MCF 10A (cell line): ENCODE measurements at regions of chr17 and their contacts with region 1.

Region 1: DNA sequence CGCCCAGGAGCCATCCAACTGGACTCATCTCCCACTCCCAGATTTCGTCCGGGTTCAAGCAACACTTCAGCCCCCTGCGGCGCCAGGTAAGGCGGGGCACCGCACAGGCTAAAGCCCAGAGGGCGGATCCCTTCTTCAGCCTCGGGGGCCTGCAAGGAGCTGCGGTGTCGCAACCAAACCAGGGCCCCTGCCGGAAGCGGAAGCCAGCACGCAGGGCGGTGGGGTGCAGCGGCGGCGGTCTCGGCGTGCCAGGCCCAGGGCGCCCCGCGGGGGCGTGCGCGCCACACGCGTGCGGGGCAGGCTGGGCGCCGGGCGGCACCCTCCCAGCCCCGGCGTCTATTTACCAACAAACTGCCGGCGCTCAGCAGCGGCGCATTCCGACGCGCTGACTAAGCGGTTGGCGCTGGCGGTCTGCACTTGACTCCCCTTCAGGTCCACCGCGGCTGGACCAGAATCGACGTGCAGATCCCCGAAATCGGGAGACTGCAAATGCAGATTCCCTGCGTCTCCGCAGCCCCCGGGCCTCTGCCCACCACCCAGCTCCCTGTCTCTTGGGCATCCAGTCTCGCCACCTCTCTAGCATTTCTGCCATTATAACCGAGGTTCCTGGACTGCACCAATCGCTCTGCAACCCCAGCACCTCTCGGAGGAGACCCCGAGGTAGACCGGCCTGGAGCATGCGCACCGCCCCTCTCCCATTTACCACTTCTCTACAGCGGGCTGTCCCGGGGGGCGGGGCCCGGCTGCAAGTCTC is 433 bp upstream of the DLX4 start:
- DNase-seq: peak; percentile 59
- H3K4me3 Mint-ChIP-seq: peak overlapping the region; percentile 83
- H3K27ac Mint-ChIP-seq: peak overlapping the region; percentile 56
- H3K4me1 Mint-ChIP-seq: peaks cover 6% of the 10 kb centered on the region
- H3K27me3 Mint-ChIP-seq: peaks cover 74% of the 10 kb centered on the region
- CTCF ChIP-seq: no peak

Region 2: GRCh38 chr17:49935526-49936210 is 32.9 kb before region 1 on chr17:
- CTCF ChIA-PET with region 1: no interaction called
- POLR2A ChIA-PET with region 1: no interaction called
- intact Hi-C with region 1: no loop called
- DNase-seq: no peak
- H3K4me3 Mint-ChIP-seq: no peak overlapping the region
- H3K27ac Mint-ChIP-seq: no peak overlapping the region
- H3K4me1 Mint-ChIP-seq: no peaks in the 10 kb centered on the region
- H3K27me3 Mint-ChIP-seq: peaks cover 86% of the 10 kb centered on the region
- CTCF ChIP-seq: no peak

Region 3: DNA sequence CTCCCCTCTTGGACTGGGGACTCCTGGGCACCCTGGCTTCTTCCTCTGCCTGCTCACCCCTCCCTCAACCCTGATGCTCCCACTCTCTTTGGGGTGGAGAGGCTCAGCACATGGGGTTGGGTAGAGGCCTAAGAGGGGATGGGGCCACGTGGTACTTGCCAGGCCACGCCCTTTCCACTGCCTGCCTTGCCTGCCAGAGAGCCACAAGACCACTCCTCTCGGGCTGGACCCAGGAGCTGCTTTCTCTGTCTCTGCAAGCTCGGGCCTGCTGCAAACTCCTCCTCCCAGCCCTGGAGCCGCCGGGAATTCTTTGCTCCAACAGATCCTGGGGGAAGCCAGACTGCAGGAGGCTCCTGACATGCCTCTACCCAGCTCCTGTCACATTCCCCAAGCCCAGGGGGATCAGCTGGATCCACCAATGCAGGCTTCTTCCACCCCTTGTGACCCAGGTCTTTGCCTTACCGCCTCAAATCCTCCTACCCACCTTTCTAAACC is 12.2 kb after region 1 on chr17:
- CTCF ChIA-PET with region 1: interaction called, 4 read pairs
- POLR2A ChIA-PET with region 1: interaction called, 34 read pairs
- intact Hi-C with region 1: no loop called
- DNase-seq: peak; percentile 37
- H3K4me3 Mint-ChIP-seq: no peak overlapping the region
- H3K27ac Mint-ChIP-seq: no peak overlapping the region
- H3K4me1 Mint-ChIP-seq: peaks cover 31% of the 10 kb centered on the region
- H3K27me3 Mint-ChIP-seq: no peaks in the 10 kb centered on the region
- CTCF ChIP-seq: no peak